Ascending aorta (tissue), 2 donors: ENCODE measurements at regions of chr20 and their contacts with region 1.

Region 1: GRCh38 chr20:51750037-51750763 is 18.0 kb downstream of the ATP9A start:
- DNase-seq: peak; percentile 74 to 94
- H3K4me3 ChIP-seq: peak overlapping the region in 1 of 2 donors; percentile 14
- H3K27ac ChIP-seq: peak overlapping the region; percentile 82 to 90
- H3K4me1 ChIP-seq: peaks cover 4 to 32% of the 10 kb centered on the region in 2 donors
- H3K27me3 ChIP-seq: no peaks in the 10 kb centered on the region
- CTCF ChIP-seq: no peak

Region 2: GRCh38 chr20:51366155-51366886 is 383.9 kb before region 1 on chr20:
- intact Hi-C with region 1: loop called (anchors 10 kb)
- DNase-seq: peak; percentile 53 to 94
- H3K4me3 ChIP-seq: peak overlapping the region in 1 of 2 donors; percentile 17
- H3K27ac ChIP-seq: peak overlapping the region; percentile 91
- H3K4me1 ChIP-seq: peaks cover 6 to 13% of the 10 kb centered on the region in 2 donors
- H3K27me3 ChIP-seq: no peaks in the 10 kb centered on the region
- CTCF ChIP-seq: no peak

Region 3: DNA sequence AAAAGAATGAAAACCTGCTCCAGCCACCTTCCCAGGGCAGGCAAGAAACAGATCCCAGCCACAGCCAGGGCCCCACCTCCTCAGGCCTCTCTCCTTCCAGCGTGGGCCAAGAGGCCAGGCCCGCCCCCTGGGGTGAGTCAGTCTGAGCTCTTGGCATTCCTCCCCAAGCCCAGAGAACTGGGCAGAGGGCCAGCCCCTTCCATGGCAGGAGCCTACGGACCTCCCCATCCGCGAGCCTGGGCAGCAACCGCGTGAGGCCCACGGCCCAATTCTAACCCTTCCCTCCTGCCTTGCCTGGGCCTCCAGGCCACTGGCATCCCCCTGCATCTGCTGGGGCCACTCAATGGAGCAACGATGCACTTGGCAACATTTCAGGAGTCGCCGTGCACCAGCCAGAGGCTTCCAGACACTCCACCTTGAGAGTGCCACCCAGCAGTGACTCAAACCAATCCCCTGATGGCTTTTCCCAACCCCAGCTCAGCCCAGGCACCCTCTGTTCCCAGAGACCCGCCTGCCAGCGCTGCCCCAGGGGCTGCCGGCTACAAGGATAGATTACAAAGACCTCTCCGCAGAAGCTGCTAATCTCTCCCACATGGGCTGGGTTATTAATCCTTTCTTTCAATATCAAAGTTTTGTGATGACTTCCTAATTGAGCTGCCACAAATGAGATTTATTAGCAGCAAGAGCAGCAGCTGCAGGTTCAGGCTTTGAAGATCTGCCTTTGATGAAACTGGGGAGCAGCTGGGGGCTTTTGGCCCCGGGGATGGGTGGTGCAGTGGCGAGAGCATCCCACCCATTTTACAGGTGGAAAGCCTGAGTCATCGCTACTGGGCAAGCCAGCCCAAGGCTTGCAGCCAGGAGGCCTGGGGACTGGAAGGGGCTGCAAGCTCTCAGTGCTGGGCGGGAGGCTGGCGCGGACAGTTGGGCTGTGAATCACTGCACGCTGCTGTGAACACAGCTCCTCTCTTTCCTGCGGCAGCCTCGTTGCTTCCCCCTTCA is 293.4 kb before region 1 on chr20:
- intact Hi-C with region 1: loop called (anchors 5 kb)
- DNase-seq: peak; percentile 80 to 98
- H3K4me3 ChIP-seq: peak overlapping the region in 1 of 2 donors; percentile 38
- H3K27ac ChIP-seq: peak overlapping the region; percentile 58 to 74
- H3K4me1 ChIP-seq: peaks cover 4 to 12% of the 10 kb centered on the region in 2 donors
- H3K27me3 ChIP-seq: no peaks in the 10 kb centered on the region
- CTCF ChIP-seq: no peak

Region 4: DNA sequence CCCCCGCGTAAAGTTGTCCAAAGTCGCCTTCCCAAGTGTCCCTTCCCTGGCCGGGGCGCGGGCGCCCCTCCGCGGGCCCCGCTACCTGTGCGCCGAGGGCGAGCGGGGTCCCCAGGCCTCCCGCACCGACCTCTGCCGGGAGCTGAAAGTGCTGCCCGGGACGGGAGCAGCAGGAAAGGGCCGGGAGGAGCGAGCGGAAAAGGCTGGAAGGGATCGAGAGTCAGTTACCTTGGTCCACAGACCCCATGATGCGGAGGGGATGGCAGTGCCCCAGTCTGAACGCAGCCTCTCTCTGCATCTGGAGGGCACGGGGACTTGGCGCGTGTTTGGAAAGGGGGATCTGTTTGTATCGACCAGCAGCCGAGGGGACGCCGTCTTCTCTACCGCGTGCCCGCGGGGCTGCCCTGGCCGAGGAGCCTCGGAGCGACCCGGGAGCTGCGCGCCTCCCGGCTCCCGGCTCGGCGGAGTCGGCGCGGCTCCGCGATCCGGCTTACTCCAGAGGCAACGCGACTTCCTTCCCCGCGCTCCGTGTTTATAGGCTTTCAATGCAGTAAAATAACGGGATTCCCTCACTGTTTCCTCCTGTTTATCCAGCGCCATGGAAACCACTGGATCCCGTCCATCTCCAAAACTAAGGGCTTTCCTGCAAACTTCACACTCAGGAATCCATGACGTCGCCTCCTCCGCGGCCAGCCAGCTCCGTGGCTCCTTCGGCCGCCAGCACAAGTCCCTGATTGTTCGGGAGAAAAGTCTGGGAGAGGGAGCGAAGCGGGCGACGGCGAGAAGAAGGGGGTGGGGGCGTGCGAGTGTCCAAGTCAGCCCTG is 187.7 kb before region 1 on chr20:
- intact Hi-C with region 1: loop called (anchors 10 kb)
- DNase-seq: peak; percentile 53 to 95
- H3K4me3 ChIP-seq: peak overlapping the region; percentile 60 to 69
- H3K27ac ChIP-seq: peak overlapping the region; percentile 92 to 93
- H3K4me1 ChIP-seq: peaks cover 6 to 24% of the 10 kb centered on the region in 2 donors
- H3K27me3 ChIP-seq: no peaks in the 10 kb centered on the region
- CTCF ChIP-seq: peak in 1 of 3 experiments; percentile 46

Region 5: GRCh38 chr20:51631011-51631950 is 118.9 kb before region 1 on chr20:
- intact Hi-C with region 1: loop called (anchors 5 kb)
- DNase-seq: peak; percentile 25 to 86
- H3K4me3 ChIP-seq: peak overlapping the region; percentile 8 to 25
- H3K27ac ChIP-seq: peak overlapping the region; percentile 78 to 90
- H3K4me1 ChIP-seq: peaks cover 15 to 21% of the 10 kb centered on the region in 2 donors
- H3K27me3 ChIP-seq: no peaks in the 10 kb centered on the region
- CTCF ChIP-seq: no peak

Region 6: GRCh38 chr20:51767010-51767558 is 16.9 kb after region 1 on chr20:
- intact Hi-C with region 1: loop called (anchors 2 kb)
- DNase-seq: peak; percentile 24 to 77
- H3K4me3 ChIP-seq: peak overlapping the region; percentile 64 to 87
- H3K27ac ChIP-seq: peak overlapping the region; percentile 52 to 80
- H3K4me1 ChIP-seq: no peaks in the 10 kb centered on the region
- H3K27me3 ChIP-seq: no peaks in the 10 kb centered on the region
- CTCF ChIP-seq: no peak

Region 7: DNA sequence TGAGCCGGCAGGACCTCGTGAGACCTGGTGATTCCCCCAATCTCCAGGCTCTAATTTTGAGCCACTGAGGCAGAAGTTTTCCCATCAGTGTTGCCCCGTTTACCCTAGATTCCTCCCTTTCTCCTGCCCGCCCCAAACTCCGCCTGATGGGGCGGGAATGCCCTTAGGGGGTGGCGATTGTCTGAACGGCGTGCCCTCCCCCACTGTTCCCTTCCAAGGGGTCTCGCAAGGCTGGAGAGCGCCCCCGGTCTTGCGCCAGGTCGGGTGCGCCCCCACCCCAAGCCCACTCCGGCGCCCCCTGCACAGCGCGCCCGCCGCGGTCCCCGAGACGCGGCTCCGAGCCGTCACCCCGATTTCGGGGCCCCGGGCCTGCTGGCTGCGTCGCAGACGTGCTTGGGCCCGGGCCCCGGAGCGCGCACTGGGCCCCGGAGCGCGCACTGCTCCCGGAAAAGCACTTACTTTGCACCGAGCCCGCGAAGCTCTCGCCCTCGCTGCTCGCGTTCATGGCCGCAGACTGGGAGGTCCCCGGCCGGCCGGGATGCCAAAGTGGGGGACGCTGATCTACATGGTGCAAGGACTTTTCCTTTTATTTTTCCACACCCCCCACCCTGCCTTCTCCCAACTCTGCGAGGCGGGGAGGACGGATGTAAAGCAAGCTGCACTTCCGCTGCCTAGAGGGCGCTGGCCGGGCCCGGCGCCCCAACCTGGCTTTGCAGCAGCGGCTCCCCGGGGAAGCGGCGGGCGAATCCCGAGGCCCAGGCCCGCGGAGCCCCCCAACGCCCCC is 441.1 kb after region 1 on chr20 and contains the start of gene ZFP64:
- intact Hi-C with region 1: loop called (anchors 5 kb)
- DNase-seq: peak in 1 of 2 donors; percentile 84
- H3K4me3 ChIP-seq: peak within 1 kb of the TSS; percentile 78 to 96
- H3K27ac ChIP-seq: peak within 1 kb of the TSS; percentile 74 to 79
- H3K4me1 ChIP-seq: peaks cover 0 to 5% of the 10 kb centered on the region in 2 donors
- H3K27me3 ChIP-seq: no peaks in the 10 kb centered on the region
- CTCF ChIP-seq: peak; percentile 16 to 54 (median 40)
- total RNA-seq, gene ZFP64: 3.4 TPM